ENCODE measurements at regions of chr9 and their contacts with region 1.

Region 1: DNA sequence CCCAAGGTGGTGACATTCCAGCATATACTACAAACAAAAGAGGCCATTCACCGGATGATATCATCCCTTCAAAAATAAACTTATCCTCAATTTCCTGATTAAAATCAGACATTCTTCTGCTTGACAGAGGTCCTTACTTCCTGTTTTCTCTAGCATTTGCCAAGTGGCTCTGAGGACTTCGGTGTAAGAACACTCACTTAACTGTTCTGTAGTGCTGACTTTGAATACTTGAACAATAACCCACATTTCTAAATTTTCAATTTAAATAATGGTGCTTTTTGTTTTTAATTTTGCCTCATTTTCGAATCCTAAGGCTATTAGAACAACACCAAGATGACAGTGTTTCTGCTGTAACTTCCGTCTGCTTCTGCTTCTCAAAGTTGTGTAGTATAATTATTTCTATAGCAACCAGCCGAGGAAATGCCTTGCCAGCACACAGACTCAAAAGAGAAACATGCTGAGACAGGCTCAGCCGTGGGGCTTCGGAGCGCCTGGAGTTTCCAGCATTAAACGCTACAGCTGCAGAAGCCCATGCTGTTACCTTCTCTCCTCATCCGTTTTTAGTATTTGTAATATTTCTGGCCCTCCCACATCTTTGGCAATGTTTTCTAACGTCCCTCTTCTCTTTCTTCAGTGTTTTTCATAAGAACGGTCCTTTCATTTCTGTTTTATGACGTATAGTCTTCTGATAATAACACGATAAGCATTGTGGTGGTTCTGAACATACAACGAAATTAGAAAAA is 19.5 kb upstream of the ANXA1 start:
- DNase-seq: peak; percentile 67 to 76
- H3K4me3 ChIP-seq: peak overlapping the region; percentile 55
- H3K27ac ChIP-seq: peak overlapping the region; percentile 78
- H3K4me1 ChIP-seq: peaks cover 31% of the 10 kb centered on the region
- H3K27me3 ChIP-seq: no peaks in the 10 kb centered on the region
- CTCF ChIP-seq: no peak

Region 2: GRCh38 chr9:72855890-72856523 is 276.2 kb before region 1 on chr9:
- CTCF ChIA-PET with region 1: no interaction called
- POLR2A ChIA-PET with region 1: no interaction called
- intact Hi-C with region 1: no loop called
- DNase-seq: no peak
- H3K4me3 ChIP-seq: no peak overlapping the region
- H3K27ac ChIP-seq: no peak overlapping the region
- H3K4me1 ChIP-seq: peaks cover 16% of the 10 kb centered on the region
- H3K27me3 ChIP-seq: no peaks in the 10 kb centered on the region
- CTCF ChIP-seq: no peak

Region 3: GRCh38 chr9:73116031-73116430 is 16.2 kb before region 1 on chr9:
- CTCF ChIA-PET with region 1: no interaction called
- POLR2A ChIA-PET with region 1: no interaction called
- intact Hi-C with region 1: loop called (anchors 1 kb)
- DNase-seq: no peak
- H3K4me3 ChIP-seq: no peak overlapping the region
- H3K27ac ChIP-seq: peak overlapping the region; percentile 51
- H3K4me1 ChIP-seq: peaks cover 30% of the 10 kb centered on the region
- H3K27me3 ChIP-seq: no peaks in the 10 kb centered on the region
- CTCF ChIP-seq: no peak

Region 4: GRCh38 chr9:73149371-73150067 is 17.3 kb after region 1 on chr9:
- CTCF ChIA-PET with region 1: interaction called, 6 read pairs
- POLR2A ChIA-PET with region 1: interaction called, 10 read pairs
- intact Hi-C with region 1: loop called (anchors 1 kb)
- DNase-seq: peak in 1 of 2 experiments; percentile 81
- H3K4me3 ChIP-seq: no peak overlapping the region; the same call in 1 of the 2 replicates
- H3K27ac ChIP-seq: peak overlapping the region; percentile 86
- H3K4me1 ChIP-seq: peaks cover 67% of the 10 kb centered on the region
- H3K27me3 ChIP-seq: no peaks in the 10 kb centered on the region
- CTCF ChIP-seq: no peak

Region 5: DNA sequence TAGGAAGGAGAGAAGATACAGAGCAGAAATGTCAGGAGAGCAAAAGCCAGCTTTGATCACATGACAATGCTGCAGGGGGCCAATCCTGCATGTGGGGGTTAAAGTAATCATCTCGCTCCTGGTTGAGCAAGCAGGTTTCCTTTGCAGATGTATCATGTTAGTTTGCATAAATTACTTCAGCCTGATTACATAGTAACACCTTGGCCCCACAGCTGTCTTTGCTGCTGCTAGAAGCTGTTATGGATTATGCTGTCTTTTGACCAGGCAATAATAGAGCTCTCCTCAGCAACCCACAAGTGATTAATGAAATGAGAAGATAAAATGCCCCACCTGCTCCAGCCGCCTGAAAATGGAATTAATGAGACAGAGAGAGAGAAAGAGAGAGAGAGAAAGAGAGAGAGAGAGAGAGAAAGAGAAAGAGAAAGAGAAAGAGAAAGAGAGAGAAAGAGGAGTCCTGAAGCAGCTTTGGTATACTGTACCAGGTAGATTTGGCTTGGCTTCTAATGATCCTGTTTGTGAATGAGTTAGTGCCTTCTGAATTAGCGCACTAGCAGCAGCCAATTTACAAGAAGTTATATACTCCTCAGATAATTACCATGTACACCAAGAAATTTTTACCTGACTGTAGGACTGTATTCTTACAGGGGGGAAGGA is 1190.6 kb after region 1 on chr9:
- CTCF ChIA-PET with region 1: no interaction called
- POLR2A ChIA-PET with region 1: interaction called, 12 read pairs
- intact Hi-C with region 1: no loop called
- DNase-seq: no peak
- H3K4me3 ChIP-seq: no peak overlapping the region
- H3K27ac ChIP-seq: no peak overlapping the region
- H3K4me1 ChIP-seq: no peaks in the 10 kb centered on the region
- H3K27me3 ChIP-seq: no peaks in the 10 kb centered on the region
- CTCF ChIP-seq: no peak